ENCODE measurements at regions of chr4 and their contacts with region 1.

Region 1: DNA sequence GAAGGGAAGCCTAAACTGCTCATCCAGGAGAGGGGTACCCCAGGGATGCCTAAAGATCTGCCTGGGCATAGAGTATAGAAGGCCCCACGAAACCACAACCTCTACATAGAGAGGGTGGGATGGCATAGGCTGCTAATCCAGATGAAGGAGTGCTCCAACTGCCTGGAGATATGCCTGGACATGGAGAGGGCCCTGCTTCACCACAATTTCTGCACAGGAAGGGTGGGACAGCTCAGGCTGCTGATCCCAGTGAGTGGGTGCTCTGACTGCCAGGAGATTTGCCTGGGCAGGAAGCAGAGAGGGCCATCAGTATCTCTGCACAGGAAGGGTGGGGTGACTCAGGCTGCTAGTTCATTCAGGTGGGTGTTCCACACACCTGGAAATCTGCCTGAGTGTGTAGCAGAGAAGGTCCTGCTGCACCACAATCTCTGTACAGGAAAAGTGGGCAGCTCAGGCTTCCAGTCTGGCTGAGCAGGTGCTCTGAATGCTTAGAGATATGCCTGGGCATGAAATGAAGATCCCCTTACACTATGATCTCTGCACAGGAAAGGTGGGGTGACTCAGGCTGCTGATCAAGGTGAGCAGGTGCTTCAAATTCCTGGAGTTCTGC is 61.1 kb downstream of the ZNF518B start:
- DNase-seq: no peak
- H3K4me3 ChIP-seq: no peak overlapping the region
- CTCF ChIP-seq: no peak
- POLR2A ChIP-seq: no peak

Region 2: DNA sequence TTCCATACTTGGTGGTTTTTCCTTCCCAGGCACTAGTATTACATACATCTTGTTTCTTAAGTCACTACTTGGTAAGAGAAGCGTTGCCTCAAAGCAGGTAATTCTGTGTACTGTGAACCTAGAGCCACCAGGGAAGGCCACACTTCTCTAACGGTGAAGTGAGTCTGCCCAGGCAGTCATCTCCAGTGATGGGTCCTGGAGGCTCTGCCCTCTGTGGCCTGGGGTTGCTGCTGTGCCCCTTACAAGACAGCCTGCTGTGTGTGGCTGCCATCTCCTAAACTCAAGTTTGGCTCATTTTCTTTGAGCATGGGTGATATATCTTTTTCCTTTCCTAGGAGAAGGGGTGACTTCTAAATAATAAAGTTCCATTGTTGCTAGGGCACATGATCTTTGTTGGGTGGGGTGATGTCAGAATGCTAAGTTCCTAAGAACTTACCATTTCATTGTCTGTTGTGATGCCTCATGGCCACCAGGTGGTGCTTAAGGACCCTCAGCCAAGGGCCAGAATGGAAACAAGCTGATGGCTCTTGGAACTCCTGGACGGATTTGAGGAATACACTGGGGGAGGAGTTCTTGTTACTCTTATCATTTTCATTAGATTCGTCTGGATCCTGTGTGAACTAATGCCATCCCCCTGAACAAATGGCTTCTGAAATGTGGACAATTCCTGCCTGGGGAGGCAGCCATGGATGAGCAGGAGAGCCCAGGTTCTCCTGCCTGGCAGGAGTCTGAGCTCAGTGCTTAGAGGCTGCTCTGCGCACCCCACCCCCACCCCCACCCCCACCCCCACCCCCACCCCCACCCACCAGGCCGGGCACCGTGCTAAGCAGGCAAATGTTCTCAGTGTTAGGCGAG is 238.4 kb before region 1 on chr4:
- intact Hi-C with region 1: loop called (anchors 5 kb)
- DNase-seq: peak; percentile 47 to 87
- H3K4me3 ChIP-seq: no peak overlapping the region
- CTCF ChIP-seq: peak in 1 of 3 donors; percentile 33
- POLR2A ChIP-seq: no peak

Region 3: GRCh38 chr4:10448991-10449390 is 52.9 kb after region 1 on chr4:
- intact Hi-C with region 1: no loop called
- DNase-seq: no peak
- H3K4me3 ChIP-seq: no peak overlapping the region
- CTCF ChIP-seq: no peak
- POLR2A ChIP-seq: no peak